ENCODE measurements at regions of chr16 and their contacts with region 1.

Region 1: GRCh38 chr16:22694887-22695382 is 119.0 kb upstream of the HS3ST2 start:
- DNase-seq: no peak
- ATAC-seq: no peak
- H3K4me3 ChIP-seq: no peak overlapping the region
- H3K27ac ChIP-seq: no peak overlapping the region
- H3K4me1 ChIP-seq: no peaks in the 10 kb centered on the region
- H3K27me3 ChIP-seq: peaks cover 6 to 13% of the 10 kb centered on the region in 2 experiments; a peak in 3 of 5 replicates
- CTCF ChIP-seq: no peak
- EP300 ChIP-seq: no peak
- POLR2A ChIP-seq: no peak
- RAD21 ChIP-seq: no peak

Region 2: DNA sequence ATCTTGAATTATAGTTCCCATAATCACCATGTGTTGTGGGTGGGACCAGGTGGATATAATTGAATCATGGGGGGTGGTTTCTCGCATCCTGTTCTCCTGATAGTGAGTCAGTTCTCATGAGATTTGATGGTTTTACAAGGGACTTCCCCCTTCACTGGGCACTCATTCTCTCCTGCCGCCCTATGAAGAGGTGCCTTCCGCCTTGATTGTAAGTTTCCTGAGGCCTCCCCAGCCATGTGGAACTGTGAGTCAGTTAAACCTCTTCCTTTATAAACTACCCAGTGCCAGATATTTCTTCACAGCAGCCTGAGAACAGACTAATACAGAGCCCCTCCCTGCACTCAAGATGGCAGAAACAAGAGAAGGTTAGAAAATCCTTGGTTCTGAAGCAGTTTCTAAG is 1510.1 kb before region 1 on chr16:
- CTCF ChIA-PET with region 1: no interaction called
- POLR2A ChIA-PET with region 1: no interaction called
- in situ Hi-C with region 1: loop called (anchors 10 kb)
- intact Hi-C with region 1: no loop called
- DNase-seq: no peak
- ATAC-seq: no peak
- H3K4me3 ChIP-seq: no peak overlapping the region
- H3K27ac ChIP-seq: no peak overlapping the region
- H3K4me1 ChIP-seq: peaks cover 5 to 8% of the 10 kb centered on the region in 2 experiments; a peak in 3 of 5 replicates
- H3K27me3 ChIP-seq: no peaks in the 10 kb centered on the region
- CTCF ChIP-seq: no peak
- EP300 ChIP-seq: no peak
- POLR2A ChIP-seq: no peak
- RAD21 ChIP-seq: no peak